B cell (primary cell): ENCODE measurements at regions of chr2 and their contacts with region 1.

Region 1: DNA sequence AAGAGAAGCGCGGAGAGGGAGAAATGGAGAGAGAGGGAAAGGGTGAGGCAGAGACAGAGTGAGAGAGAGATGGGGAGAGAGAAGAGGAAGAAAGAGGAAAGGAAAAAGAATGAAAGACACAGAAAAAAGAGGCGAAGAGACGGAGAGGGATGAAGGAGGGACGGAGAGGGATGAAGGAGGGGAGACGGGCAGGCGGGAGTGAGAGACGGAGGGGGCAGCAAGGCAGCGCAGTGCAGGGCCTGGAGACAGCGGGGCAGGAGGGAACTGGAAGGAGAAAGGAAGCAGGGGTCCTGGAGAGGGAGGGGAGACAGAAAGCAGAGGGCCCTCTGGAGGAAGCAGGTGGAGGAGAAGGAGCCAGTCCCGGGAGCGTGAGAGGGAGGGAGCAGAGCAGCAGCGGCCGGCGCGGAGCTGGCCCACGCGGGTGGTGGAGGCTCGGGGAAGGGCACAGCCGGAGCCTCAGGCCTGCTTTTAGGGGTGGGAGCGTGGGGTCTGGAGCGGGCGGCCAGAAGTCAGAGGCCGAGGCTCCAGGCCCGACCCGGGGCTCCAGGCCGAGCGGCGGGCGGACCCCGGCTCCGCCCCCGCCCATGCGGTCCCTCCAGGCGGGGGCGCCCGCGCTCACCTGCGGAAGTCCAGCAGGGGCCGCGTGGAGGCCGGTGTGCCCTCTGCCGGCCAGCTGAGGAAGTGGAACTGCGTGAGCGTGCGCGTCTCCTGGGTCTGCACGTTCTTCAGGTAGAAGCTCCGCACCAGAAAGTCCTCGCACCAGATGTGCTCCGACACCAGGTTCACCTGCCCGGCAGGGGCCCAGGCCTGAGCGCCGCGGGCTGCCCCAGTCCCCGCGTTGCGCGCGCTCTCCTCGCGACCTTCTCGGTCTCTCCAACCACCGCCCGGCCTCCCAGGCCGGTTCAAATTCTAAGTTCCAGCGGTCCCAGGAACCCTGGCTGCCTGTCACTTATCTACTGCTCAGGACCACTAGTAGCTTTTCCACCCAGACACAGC is 14.5 kb downstream of the PTPRN start:
- DNase-seq: peak; percentile 95
- ATAC-seq: peak; percentile 97
- H3K4me3 ChIP-seq: peak overlapping the region in 4 of 5 experiments; percentile 48 to 67 (median 60)
- H3K4me3 Mint-ChIP-seq: peak overlapping the region; percentile 80
- H3K27ac ChIP-seq: peak overlapping the region; percentile 62 to 74
- H3K27ac Mint-ChIP-seq: peak overlapping the region; percentile 74
- H3K4me1 ChIP-seq: peaks cover 14 to 19% of the 10 kb centered on the region in 2 donors
- H3K4me1 Mint-ChIP-seq: peaks cover 16% of the 10 kb centered on the region
- H3K27me3 ChIP-seq: peaks cover 0 to 7% (median 1%) of the 10 kb centered on the region in 4 experiments
- H3K27me3 Mint-ChIP-seq: no peaks in the 10 kb centered on the region
- CTCF ChIP-seq: peak; percentile 99

Region 2: DNA sequence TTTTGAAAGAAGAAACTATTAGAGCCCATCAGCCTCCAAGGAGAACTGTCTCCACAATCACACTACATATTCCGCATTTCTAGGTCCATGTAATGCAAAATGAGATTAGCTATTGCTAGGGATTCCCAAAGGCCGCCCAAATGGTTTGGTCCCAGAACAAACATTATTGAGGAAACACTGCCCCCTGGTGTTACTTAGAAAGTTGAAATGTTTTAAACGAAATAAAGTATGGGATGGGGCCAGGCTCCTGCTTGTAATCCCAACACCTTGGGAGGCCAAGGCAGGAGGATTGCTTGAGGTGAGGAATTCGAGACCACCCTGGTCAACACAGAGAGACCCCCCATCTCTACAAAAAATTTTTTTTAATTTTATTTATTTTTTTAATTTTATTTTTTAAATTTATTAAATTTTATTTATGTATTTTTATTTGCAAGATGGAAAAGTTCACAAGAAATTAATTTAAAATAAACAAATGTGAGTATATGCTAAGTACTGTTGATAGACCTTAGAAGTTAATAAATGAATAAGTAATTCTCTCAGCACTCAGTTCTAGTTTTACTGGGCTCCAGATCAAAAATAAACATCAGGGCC is 139.5 kb before region 1 on chr2:
- CTCF ChIA-PET with region 1: interaction called, 69 read pairs
- POLR2A ChIA-PET with region 1: interaction called, 5 read pairs
- intact Hi-C with region 1: loop called (anchors 1 kb)
- DNase-seq: peak; percentile 74
- ATAC-seq: no peak
- H3K4me3 ChIP-seq: no peak overlapping the region
- H3K4me3 Mint-ChIP-seq: no peak overlapping the region
- H3K27ac ChIP-seq: no peak overlapping the region
- H3K27ac Mint-ChIP-seq: no peak overlapping the region
- H3K4me1 ChIP-seq: peaks cover 5 to 9% of the 10 kb centered on the region in 2 donors
- H3K4me1 Mint-ChIP-seq: peaks cover 9% of the 10 kb centered on the region
- H3K27me3 ChIP-seq: no peaks in the 10 kb centered on the region
- H3K27me3 Mint-ChIP-seq: no peaks in the 10 kb centered on the region
- CTCF ChIP-seq: peak; percentile 87

Region 3: DNA sequence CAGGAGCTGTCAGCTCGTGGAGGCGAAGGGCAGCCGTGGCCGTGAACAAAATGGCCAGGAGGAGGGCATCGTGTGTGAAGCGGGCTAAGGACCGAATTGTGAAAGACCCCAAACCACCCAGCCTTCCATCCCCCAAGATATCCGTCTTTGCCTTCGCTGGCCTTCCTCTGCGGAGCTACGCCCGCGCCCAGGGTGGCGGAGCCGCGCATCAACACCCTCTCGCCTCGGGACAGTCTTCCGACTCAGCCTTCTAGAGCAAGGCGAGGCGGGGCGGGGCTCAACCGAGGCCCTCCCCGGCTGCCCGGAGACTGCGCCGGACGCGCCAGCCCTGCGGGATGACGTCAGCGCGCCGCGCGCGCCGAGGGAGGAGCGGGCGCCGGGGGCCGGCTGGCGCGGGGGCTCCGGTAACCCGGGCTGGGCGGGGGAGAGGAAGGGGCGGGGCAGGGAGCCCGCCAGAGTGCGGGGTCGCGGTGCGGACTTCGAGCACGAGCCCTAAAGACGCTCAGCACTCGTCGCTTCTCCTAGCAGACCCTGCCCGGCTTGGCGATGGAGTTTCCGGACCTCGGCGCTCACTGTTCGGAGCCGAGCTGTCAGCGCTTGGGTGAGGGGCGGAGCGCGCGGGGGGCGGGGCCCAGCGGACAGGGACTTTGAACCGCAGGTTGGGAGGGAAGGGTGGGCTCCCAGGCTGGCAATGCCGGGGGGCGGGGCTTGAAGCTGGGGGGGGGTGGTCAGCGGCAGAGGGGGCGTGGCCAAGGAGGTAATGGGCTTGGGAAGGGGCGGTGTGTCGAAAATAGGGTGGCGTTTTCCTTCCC is 88.0 kb before region 1 on chr2 and contains the start of gene ZFAND2B:
- CTCF ChIA-PET with region 1: interaction called, 22 read pairs
- POLR2A ChIA-PET with region 1: interaction called, 7 read pairs
- intact Hi-C with region 1: loop called (anchors 1 kb)
- DNase-seq: peak; percentile 97
- ATAC-seq: peak; percentile 91
- H3K4me3 ChIP-seq: peak within 1 kb of the TSS; percentile 53 to 82 (median 76)
- H3K4me3 Mint-ChIP-seq: peak within 1 kb of the TSS; percentile 96
- H3K27ac ChIP-seq: peak within 1 kb of the TSS; percentile 84 to 94
- H3K27ac Mint-ChIP-seq: peak within 1 kb of the TSS; percentile 98
- H3K4me1 ChIP-seq: peaks cover 16 to 23% of the 10 kb centered on the region in 2 donors
- H3K4me1 Mint-ChIP-seq: peaks cover 28% of the 10 kb centered on the region
- H3K27me3 ChIP-seq: no peaks in the 10 kb centered on the region
- H3K27me3 Mint-ChIP-seq: no peaks in the 10 kb centered on the region
- CTCF ChIP-seq: no peak
- total RNA-seq, gene ZFAND2B: 55.2 and 58.7 TPM in 2 replicates

Region 4: DNA sequence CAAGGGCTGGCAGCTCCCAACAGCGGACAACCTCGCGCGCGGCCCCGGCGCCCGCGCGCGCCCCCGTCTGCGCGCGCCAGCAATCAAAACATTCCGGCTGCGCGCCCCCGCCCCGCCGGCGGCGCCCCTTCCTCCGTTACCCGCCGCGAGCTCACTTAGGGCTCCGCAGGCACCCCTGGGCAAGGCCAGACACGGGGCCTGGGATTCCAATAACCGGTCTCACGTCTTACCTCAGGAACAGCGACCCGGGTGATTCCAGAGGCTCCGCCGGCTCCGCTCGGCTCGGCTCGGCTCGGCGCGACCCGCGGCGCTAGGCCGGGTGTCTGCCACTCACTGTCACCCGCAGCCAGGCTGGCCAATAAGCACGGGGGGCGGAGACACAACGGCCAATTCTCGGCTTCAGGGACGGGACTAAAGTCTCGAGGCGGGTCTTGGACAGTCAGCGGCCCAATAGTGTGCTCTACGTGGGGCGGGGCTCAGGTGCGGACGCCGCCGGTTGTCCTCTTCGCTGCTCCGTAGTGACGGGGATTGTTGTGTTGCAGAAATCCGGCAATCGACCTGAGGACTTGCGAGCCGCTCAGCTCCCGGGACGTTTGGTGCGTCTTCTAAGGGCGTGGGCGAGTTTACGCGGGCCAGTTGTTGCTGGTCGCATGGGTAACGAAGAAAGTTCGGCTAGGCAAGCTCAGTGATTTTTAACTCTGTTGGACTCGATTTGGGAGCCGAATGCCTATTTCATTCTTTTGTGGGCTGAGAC is 65.2 kb before region 1 on chr2 and contains the starts of genes ANKZF1 and ATG9A:
- CTCF ChIA-PET with region 1: interaction called, 30 read pairs
- POLR2A ChIA-PET with region 1: interaction called, 10 read pairs
- intact Hi-C with region 1: loop called (anchors 1 kb)
- DNase-seq: peak; percentile 98
- ATAC-seq: peak; percentile 97
- H3K4me3 ChIP-seq: peak within 1 kb of the TSS; percentile 86 to 98 (median 92)
- H3K4me3 Mint-ChIP-seq: peak within 1 kb of the TSS; percentile 99
- H3K27ac ChIP-seq: peak within 1 kb of the TSS; percentile 74 to 87
- H3K27ac Mint-ChIP-seq: peak within 1 kb of the TSS; percentile 98
- H3K4me1 ChIP-seq: peaks cover 17 to 23% of the 10 kb centered on the region in 2 donors
- H3K4me1 Mint-ChIP-seq: peaks cover 38% of the 10 kb centered on the region
- H3K27me3 ChIP-seq: no peaks in the 10 kb centered on the region
- H3K27me3 Mint-ChIP-seq: no peaks in the 10 kb centered on the region
- CTCF ChIP-seq: no peak
- total RNA-seq, gene ANKZF1: 181 and 199 TPM in 2 replicates
- total RNA-seq, gene ATG9A: 59.4 and 65.5 TPM in 2 replicates

Region 5: DNA sequence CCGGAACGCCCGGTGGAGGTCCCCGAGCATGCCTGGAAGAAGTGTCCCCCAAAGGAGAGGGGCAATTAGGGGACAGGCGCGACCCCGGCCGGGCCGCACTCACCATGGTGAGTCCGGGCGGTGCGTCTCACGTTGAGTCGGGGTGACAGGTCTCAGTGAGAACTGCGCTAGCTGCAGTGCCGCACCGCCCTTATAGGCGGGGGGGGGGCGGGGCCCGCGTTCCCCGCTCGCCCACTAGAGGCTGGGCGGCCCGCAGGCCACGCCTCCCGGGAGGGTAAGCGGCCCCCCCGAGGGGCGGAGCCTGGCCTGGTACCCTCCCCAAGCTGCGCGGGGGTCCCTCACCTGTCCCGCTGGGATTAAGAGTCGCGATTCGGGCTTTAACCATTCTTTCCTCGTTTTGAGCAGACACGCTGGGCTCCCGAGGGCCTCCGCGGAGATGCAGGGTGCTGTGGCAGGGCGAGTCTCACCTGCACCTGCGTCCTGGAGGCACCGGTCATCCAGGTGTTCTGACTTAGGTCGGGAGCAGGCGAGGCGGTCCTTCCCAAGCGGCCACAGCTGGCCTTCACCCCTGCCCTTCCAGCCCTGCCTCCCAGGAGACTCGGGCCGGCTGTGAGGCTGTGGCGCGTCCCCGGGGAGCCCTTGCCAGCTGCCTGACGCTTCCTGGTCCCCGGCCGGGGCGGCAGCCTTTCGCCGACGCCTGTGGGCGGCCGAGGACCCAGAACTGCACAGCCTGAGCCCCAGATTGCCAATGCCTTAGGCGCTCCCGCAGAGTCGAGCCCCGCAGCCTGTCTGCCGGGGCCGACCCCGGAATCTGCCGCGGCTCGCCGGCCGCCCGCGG is 40.7 kb before region 1 on chr2 and contains the start of gene TUBA4A:
- CTCF ChIA-PET with region 1: interaction called, 69 read pairs
- POLR2A ChIA-PET with region 1: interaction called, 19 read pairs
- intact Hi-C with region 1: loop called (anchors 1 kb)
- DNase-seq: peak; percentile 93
- ATAC-seq: peak; percentile 72
- H3K4me3 ChIP-seq: peak within 1 kb of the TSS; percentile 83 to 97 (median 90)
- H3K4me3 Mint-ChIP-seq: peak within 1 kb of the TSS; percentile 87
- H3K27ac ChIP-seq: peak within 1 kb of the TSS; percentile 93 to 94
- H3K27ac Mint-ChIP-seq: peak within 1 kb of the TSS; percentile 96
- H3K4me1 ChIP-seq: peaks cover 34 to 44% of the 10 kb centered on the region in 2 donors
- H3K4me1 Mint-ChIP-seq: peaks cover 49% of the 10 kb centered on the region
- H3K27me3 ChIP-seq: no peaks in the 10 kb centered on the region
- H3K27me3 Mint-ChIP-seq: no peaks in the 10 kb centered on the region
- CTCF ChIP-seq: no peak
- total RNA-seq, gene TUBA4A: 196 and 213 TPM in 2 replicates